ENCODE measurements at regions of chr9 and their contacts with region 1.

Region 1: GRCh38 chr9:129845373-129845772 is 10.1 kb downstream of the USP20 start:
- DNase-seq: no peak
- H3K4me3 Mint-ChIP-seq: peak overlapping the region; percentile 37
- H3K27ac Mint-ChIP-seq: peak overlapping the region; percentile 85
- H3K4me1 Mint-ChIP-seq: peaks cover 22% of the 10 kb centered on the region
- H3K27me3 Mint-ChIP-seq: no peaks in the 10 kb centered on the region

Region 2: GRCh38 chr9:129796029-129796910 is 49.1 kb before region 1 on chr9:
- intact Hi-C with region 1: no loop called
- DNase-seq: no peak
- H3K4me3 Mint-ChIP-seq: no peak overlapping the region
- H3K27ac Mint-ChIP-seq: no peak overlapping the region
- H3K4me1 Mint-ChIP-seq: no peaks in the 10 kb centered on the region
- H3K27me3 Mint-ChIP-seq: peaks cover 7% of the 10 kb centered on the region

Region 3: GRCh38 chr9:129860653-129861446 is 15.5 kb after region 1 on chr9:
- intact Hi-C with region 1: loop called (anchors 2 kb)
- DNase-seq: peak; percentile 65
- H3K4me3 Mint-ChIP-seq: peak overlapping the region; percentile 42
- H3K27ac Mint-ChIP-seq: peak overlapping the region; percentile 88
- H3K4me1 Mint-ChIP-seq: peaks cover 52% of the 10 kb centered on the region
- H3K27me3 Mint-ChIP-seq: no peaks in the 10 kb centered on the region